Activated CD8-positive, alpha-beta T cell treated with anti-CD3 and anti-CD28 coated beads, Interleukin-2, amount 10 ng/mL, durations not matched to agents 7 days and 5 days (primary cell): ENCODE measurements at regions of chr15 and their contacts with region 1.

Region 1: GRCh38 chr15:44663409-44664308 is at the start of gene SPG11:
- DNase-seq: peak; percentile 99
- ATAC-seq: peak; percentile 83
- H3K4me3 Mint-ChIP-seq: peak within 1 kb of the TSS; percentile 98
- H3K27ac Mint-ChIP-seq: peak within 1 kb of the TSS; percentile 95
- H3K4me1 Mint-ChIP-seq: peaks cover 50% of the 10 kb centered on the region
- H3K27me3 Mint-ChIP-seq: no peaks in the 10 kb centered on the region
- total RNA-seq, gene SPG11: 73.8 to 75.8 TPM

Region 2: GRCh38 chr15:44584162-44584749 is 79.4 kb before region 1 on chr15:
- CTCF ChIA-PET with region 1: interaction called, 12 read pairs
- POLR2A ChIA-PET with region 1: interaction called, 9 read pairs
- DNase-seq: peak; percentile 64
- ATAC-seq: peak; percentile 79
- H3K4me3 Mint-ChIP-seq: no peak overlapping the region
- H3K27ac Mint-ChIP-seq: no peak overlapping the region
- H3K4me1 Mint-ChIP-seq: peaks cover 2% of the 10 kb centered on the region
- H3K27me3 Mint-ChIP-seq: no peaks in the 10 kb centered on the region

Region 3: GRCh38 chr15:44676676-44677075 is 13.0 kb after region 1 on chr15:
- CTCF ChIA-PET with region 1: interaction called, 105 read pairs
- POLR2A ChIA-PET with region 1: interaction called, 127 read pairs
- DNase-seq: peak; percentile 61
- ATAC-seq: peak; percentile 48
- H3K4me3 Mint-ChIP-seq: peak overlapping the region; percentile 70
- H3K27ac Mint-ChIP-seq: peak overlapping the region; percentile 95
- H3K4me1 Mint-ChIP-seq: peaks cover 82% of the 10 kb centered on the region
- H3K27me3 Mint-ChIP-seq: no peaks in the 10 kb centered on the region

Region 4: GRCh38 chr15:44682211-44682610 is 18.6 kb after region 1 on chr15:
- CTCF ChIA-PET with region 1: interaction called, 105 read pairs
- POLR2A ChIA-PET with region 1: interaction called, 127 read pairs
- DNase-seq: no peak
- ATAC-seq: no peak
- H3K4me3 Mint-ChIP-seq: peak overlapping the region; percentile 66
- H3K27ac Mint-ChIP-seq: peak overlapping the region; percentile 88
- H3K4me1 Mint-ChIP-seq: peaks cover 89% of the 10 kb centered on the region
- H3K27me3 Mint-ChIP-seq: no peaks in the 10 kb centered on the region

Region 5: DNA sequence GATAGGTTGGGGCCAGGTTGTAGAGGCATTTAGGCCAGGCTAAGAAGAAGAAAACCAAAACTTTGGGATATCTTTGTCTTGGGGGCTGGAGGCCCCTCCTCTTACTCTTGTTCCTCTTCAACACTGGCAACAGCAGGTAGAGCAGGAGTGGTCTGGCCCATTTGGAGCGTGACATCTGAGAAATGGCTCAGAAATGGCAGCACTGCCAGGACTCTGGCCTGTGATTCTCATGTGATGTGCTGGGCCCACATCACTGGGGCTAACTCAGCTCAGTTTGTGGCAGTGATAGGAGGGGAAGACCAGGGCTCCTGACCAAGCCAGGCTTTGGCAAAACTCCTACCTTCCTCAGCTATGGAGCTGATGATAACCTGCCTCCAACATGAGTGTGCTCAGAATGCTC is 29.0 kb after region 1 on chr15:
- CTCF ChIA-PET with region 1: interaction called, 14 read pairs
- POLR2A ChIA-PET with region 1: interaction called, 13 read pairs
- DNase-seq: no peak
- ATAC-seq: no peak
- H3K4me3 Mint-ChIP-seq: no peak overlapping the region
- H3K27ac Mint-ChIP-seq: no peak overlapping the region
- H3K4me1 Mint-ChIP-seq: peaks cover 49% of the 10 kb centered on the region
- H3K27me3 Mint-ChIP-seq: peaks cover 1% of the 10 kb centered on the region

Region 6: GRCh38 chr15:44728576-44729407 is 65.1 kb after region 1 on chr15:
- CTCF ChIA-PET with region 1: interaction called, 218 read pairs
- POLR2A ChIA-PET with region 1: interaction called, 336 read pairs
- DNase-seq: peak; percentile 98
- ATAC-seq: peak; percentile 82
- H3K4me3 Mint-ChIP-seq: peak overlapping the region; percentile 99
- H3K27ac Mint-ChIP-seq: peak overlapping the region; percentile 100
- H3K4me1 Mint-ChIP-seq: peaks cover 72% of the 10 kb centered on the region
- H3K27me3 Mint-ChIP-seq: no peaks in the 10 kb centered on the region

Region 7: DNA sequence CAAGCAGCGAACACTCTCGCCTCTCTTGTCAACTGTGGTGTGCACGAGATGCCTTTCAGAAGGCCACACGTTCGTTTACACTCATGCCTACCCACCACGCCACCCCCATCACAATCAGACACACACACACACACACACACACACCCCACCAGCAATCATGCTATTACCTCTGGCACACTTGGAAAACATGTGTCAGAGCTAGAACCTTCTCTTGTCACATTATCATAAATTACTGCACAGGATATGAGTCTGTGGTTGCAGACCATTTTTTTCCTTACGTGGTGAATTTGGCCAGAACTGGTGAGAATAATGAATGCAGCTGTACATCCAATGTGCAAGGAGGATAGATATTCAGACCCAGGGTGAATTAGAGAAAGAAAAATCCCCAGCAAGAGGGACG is 125.1 kb after region 1 on chr15:
- CTCF ChIA-PET with region 1: interaction called, 22 read pairs
- POLR2A ChIA-PET with region 1: interaction called, 3 read pairs
- DNase-seq: peak; percentile 59
- ATAC-seq: peak; percentile 25
- H3K4me3 Mint-ChIP-seq: no peak overlapping the region
- H3K27ac Mint-ChIP-seq: peak overlapping the region; percentile 64
- H3K4me1 Mint-ChIP-seq: peaks cover 30% of the 10 kb centered on the region
- H3K27me3 Mint-ChIP-seq: no peaks in the 10 kb centered on the region